Caco-2 (cell line): ENCODE measurements at regions of chr6 and their contacts with region 1.

Region 1: DNA sequence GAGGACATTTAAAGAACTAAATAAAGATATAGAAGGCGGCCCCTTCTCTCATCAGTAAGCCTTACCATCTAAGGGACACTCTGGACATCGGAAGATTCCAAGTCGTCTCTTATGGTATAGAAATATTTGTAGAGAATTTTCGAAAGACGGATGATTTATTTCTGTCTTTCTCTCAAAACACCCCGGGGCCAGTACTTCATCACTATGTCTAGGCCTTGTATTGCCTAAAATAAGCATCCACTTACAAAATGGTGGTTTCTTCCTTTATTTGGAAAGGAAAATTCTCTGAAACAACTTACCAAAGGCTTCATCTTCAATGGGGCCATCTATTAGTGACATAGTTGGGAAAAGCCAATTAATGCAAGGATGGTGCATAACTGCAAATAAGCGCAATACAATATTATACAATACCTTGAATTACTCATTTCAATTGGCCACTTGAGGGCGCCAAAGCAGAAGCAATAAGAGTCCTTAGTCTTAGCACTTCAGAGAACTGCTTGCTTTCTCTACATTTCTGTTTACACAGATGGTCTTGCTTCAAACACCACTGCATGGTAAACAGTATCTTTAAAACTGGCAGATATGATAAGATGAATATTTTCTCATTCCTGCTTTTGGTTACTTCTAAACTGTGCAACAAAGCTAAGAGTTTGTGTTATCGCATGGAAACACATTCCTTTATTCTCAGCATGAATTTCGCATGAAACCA is 113.2 kb downstream of the VIP start:
- DNase-seq: peak; percentile 44 to 66
- H3K4me3 ChIP-seq: no peak overlapping the region
- H3K4me3 Mint-ChIP-seq: no peak overlapping the region
- H3K27ac Mint-ChIP-seq: no peak overlapping the region
- H3K4me1 ChIP-seq: no peaks in the 10 kb centered on the region
- H3K4me1 Mint-ChIP-seq: no peaks in the 10 kb centered on the region
- H3K27me3 ChIP-seq: no peaks in the 10 kb centered on the region
- H3K27me3 Mint-ChIP-seq: peaks cover 8% of the 10 kb centered on the region
- CTCF ChIP-seq: peak; percentile 58 to 67

Region 2: DNA sequence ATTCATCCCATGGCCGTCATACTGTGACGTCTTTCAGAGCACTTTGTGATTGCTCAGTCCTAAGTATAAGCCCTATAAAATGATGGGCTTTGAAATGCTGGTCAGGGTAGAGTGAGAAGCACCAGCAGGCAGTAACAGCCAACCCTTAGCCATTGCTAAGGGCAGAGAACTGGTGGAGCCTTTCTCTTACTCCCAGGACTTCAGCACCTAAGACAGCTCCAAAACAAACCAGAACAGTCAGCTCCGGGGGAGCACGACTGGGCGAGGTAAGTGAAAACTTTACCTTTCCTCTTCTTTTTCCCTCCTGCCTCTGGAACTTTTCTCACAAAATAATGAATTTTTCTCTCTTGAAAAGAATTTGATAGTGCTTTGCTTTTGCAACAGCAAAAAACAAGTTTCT is 113.1 kb before region 1 on chr6 and contains the start of gene VIP:
- CTCF ChIA-PET with region 1: no interaction called
- POLR2A ChIA-PET with region 1: no interaction called
- intact Hi-C with region 1: loop called (anchors 10 kb)
- DNase-seq: peak in 1 of 2 experiments; percentile 60
- H3K4me3 ChIP-seq: no peak within 1 kb of the TSS
- H3K4me3 Mint-ChIP-seq: no peak within 1 kb of the TSS
- H3K27ac Mint-ChIP-seq: no peak within 1 kb of the TSS
- H3K4me1 ChIP-seq: no peaks in the 10 kb centered on the region
- H3K4me1 Mint-ChIP-seq: no peaks in the 10 kb centered on the region
- H3K27me3 ChIP-seq: no peaks in the 10 kb centered on the region
- H3K27me3 Mint-ChIP-seq: no peaks in the 10 kb centered on the region
- CTCF ChIP-seq: no peak
- total RNA-seq, gene VIP: not detected in 2 replicates

Region 3: GRCh38 chr6:152897799-152898399 is 34.1 kb after region 1 on chr6:
- CTCF ChIA-PET with region 1: no interaction called
- POLR2A ChIA-PET with region 1: no interaction called
- intact Hi-C with region 1: loop called (anchors 1 kb)
- DNase-seq: peak; percentile 65 to 82
- H3K4me3 ChIP-seq: no peak overlapping the region
- H3K4me3 Mint-ChIP-seq: no peak overlapping the region
- H3K27ac Mint-ChIP-seq: no peak overlapping the region
- H3K4me1 ChIP-seq: no peaks in the 10 kb centered on the region
- H3K4me1 Mint-ChIP-seq: no peaks in the 10 kb centered on the region
- H3K27me3 ChIP-seq: no peaks in the 10 kb centered on the region
- H3K27me3 Mint-ChIP-seq: peaks cover 14% of the 10 kb centered on the region
- CTCF ChIP-seq: peak; percentile 79 to 88

Region 4: DNA sequence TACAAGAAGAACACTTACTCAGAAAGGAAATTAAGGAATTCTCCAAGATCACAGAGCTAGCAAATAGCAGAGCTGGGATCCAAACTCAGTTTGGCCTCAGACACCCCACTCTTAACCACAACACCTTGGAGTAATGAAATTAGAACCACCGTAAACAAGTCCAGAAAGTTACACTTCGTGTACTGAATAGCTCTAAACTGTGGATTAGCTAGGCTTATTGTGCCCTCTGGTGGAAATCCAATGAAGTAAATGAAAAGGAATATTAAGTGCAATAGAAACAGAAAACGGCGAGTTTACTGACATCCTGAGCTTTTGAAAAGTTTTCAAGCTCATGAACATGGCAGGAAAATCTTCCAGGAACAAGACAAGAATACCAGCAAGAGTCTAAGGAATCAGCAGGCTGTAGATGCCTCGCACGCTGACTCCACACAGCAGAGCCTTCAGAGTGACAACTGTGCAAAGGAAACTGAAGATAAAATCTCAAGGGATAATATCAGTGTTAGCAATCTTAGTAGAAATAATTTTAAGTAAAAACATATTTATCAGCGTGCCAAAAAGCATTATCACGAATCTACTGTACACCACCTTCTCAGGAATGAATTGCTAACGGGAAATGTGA is 84.5 kb after region 1 on chr6:
- CTCF ChIA-PET with region 1: interaction called, 3 read pairs
- POLR2A ChIA-PET with region 1: no interaction called
- intact Hi-C with region 1: loop called (anchors 1 kb)
- DNase-seq: peak in 1 of 2 experiments; percentile 17
- H3K4me3 ChIP-seq: no peak overlapping the region
- H3K4me3 Mint-ChIP-seq: no peak overlapping the region
- H3K27ac Mint-ChIP-seq: no peak overlapping the region
- H3K4me1 ChIP-seq: no peaks in the 10 kb centered on the region
- H3K4me1 Mint-ChIP-seq: no peaks in the 10 kb centered on the region
- H3K27me3 ChIP-seq: no peaks in the 10 kb centered on the region
- H3K27me3 Mint-ChIP-seq: peaks cover 7% of the 10 kb centered on the region
- CTCF ChIP-seq: peak; percentile 46 to 63

Region 5: DNA sequence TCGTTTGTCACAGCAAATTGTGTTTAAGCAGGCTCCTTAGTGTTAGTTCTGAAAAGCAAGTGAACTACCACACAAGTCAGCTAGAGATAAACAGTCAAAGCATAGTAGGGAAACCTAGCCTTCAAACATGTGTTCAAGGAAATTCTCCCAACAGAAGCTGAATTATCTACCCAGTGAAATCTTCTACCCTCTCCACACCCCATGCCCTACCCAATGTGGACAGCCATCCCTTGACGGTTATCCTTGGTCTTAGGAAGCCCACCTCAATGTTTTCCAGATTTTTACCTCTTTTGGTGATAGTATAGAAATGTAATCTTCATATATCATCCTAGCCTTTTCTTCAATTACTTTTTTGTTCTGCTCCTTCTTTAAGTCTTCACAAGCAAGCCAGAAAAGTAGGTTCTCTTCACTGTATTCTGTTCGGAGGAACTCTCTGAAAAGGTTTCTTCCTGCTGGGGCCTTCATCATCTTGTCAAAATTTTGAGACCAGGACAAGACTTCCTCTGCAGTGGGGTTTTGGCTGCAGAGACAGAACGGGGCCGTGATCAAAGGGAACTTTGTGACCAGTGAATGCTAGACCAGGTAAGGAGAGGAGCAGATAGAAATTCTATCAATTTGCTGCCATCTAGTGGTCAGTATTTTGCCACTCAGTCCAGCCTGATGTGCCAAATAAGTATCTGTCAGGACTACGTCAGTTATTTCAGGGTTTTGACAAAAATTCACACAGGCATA is 160.4 kb after region 1 on chr6:
- CTCF ChIA-PET with region 1: no interaction called
- POLR2A ChIA-PET with region 1: no interaction called
- intact Hi-C with region 1: loop called (anchors 1 kb)
- DNase-seq: peak; percentile 52 to 59
- H3K4me3 ChIP-seq: no peak overlapping the region
- H3K4me3 Mint-ChIP-seq: no peak overlapping the region
- H3K27ac Mint-ChIP-seq: no peak overlapping the region
- H3K4me1 ChIP-seq: no peaks in the 10 kb centered on the region
- H3K4me1 Mint-ChIP-seq: no peaks in the 10 kb centered on the region
- H3K27me3 ChIP-seq: no peaks in the 10 kb centered on the region
- H3K27me3 Mint-ChIP-seq: peaks cover 9% of the 10 kb centered on the region
- CTCF ChIP-seq: peak; percentile 66 to 72